ENCODE measurements at regions of chr2 and their contacts with region 1.

Region 1: DNA sequence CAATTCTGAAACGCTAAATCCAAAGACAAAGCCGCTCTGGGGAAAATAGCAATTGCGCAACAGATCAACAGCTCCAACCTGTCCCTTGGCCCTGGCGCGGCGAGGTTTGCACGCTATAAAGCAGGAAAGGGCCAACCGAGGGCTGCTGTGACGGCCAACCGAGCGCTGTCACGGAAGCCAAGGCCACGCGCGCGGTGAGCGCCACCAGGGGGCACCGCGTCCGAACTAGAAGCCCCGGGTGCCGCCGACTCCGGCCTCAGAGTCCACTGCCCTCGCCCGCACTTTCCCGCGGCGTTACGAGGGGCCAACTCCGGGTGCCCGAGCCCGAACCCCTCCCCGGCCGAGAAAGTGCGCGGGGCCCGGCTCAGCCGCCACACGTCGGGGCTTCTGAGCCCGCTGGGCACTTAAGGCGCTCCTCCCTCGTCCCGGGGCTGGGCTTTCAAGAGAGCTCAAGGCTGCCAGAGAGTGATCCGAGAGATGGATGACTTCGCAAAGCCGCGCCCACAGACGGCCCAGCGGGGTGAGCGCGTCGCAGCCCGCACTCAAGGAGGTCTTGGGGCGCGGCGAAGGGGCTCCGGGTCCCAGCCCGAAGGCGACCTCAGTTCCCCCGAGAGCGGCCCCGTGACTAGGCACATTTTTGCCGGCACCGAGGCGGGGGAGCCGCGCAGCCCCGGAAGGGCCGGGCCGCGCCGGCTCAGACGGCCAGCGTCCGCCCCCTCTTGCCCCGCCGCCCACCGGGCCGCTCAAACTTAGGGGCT is 897 bp downstream of the NFE2L2 start:
- DNase-seq: peak; percentile 93
- H3K4me3 Mint-ChIP-seq: peak overlapping the region; percentile 91
- H3K27ac Mint-ChIP-seq: peak overlapping the region; percentile 97
- H3K4me1 Mint-ChIP-seq: peaks cover 57% of the 10 kb centered on the region
- H3K27me3 Mint-ChIP-seq: no peaks in the 10 kb centered on the region

Region 2: DNA sequence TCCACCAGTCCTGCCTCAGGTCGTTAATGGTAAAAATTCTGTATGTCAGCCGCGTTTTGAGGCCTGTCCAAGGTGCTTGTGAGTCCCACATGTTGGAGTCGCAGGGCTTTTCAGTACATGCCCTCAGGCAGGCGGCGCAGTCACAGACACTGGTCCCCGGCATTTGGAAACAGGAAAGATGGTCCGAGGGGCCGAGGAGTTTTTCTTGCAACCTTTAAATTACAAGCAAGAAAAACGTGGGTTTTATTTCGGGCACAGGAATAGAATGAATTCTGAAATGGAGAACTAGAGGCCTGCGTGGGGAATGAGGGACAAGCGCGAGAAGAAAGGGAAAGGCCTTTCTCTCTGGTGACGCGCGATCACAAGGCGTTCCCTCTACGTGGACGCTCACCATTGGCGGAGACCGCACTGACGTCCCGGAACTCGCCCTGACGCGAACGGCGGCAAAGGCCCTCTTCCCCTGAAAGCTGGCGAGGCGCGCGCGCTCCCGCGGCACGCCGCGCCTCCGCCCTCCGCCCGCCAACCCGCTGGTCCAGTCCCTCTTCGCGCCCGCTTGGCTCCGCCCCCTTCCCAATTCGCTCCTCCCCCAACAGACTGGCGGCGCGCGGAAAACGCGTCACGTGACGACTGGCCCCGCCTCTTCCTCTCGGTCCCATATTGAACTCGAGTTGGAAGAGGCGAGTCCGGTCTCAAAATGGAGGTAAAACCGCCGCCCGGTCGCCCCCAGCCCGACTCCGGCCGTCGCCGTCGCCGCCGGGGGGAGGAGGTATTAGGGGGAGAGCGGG is 51.3 kb before region 1 on chr2 and contains the start of gene HNRNPA3:
- CTCF ChIA-PET with region 1: interaction called, 9 read pairs
- POLR2A ChIA-PET with region 1: interaction called, 11 read pairs
- DNase-seq: peak; percentile 99
- H3K4me3 Mint-ChIP-seq: peak within 1 kb of the TSS; percentile 87
- H3K27ac Mint-ChIP-seq: peak within 1 kb of the TSS; percentile 99
- H3K4me1 Mint-ChIP-seq: peaks cover 47% of the 10 kb centered on the region
- H3K27me3 Mint-ChIP-seq: no peaks in the 10 kb centered on the region
- total RNA-seq, gene HNRNPA3: 312 to 318 TPM

Region 3: DNA sequence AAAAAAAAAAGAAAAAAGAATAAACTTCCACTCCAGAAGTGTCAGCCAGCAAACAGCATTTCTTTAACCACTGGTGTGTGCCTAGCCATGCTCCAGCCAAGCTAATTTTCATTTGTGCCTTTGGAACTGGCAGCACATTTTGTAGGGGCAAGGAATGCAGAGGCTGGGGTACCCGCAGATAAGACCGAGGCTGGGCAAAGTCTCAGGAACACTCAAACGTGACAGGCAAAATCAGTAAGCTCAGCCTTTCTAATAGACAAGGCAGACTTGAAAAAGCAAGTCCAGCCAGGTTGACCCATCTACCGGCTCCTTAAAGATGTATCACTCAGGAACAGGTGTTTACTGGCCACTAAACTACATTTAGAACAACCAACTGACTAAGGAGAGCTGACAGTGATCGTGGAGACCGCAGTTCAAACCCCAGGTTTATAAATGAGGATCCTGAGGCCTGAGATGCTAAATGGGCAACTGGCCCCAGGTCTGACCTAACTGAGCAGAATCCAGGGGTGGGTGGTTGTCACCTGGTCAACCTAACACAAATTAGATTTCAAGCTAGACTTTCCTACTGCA is 15.9 kb before region 1 on chr2:
- CTCF ChIA-PET with region 1: interaction called, 52 read pairs
- POLR2A ChIA-PET with region 1: interaction called, 7 read pairs
- DNase-seq: no peak
- H3K4me3 Mint-ChIP-seq: no peak overlapping the region
- H3K27ac Mint-ChIP-seq: peak overlapping the region; percentile 19
- H3K4me1 Mint-ChIP-seq: peaks cover 72% of the 10 kb centered on the region
- H3K27me3 Mint-ChIP-seq: no peaks in the 10 kb centered on the region

Region 4: GRCh38 chr2:177289824-177290628 is 26.4 kb after region 1 on chr2:
- CTCF ChIA-PET with region 1: interaction called, 74 read pairs
- POLR2A ChIA-PET with region 1: interaction called, 15 read pairs
- DNase-seq: peak; percentile 47
- H3K4me3 Mint-ChIP-seq: peak overlapping the region; percentile 60
- H3K27ac Mint-ChIP-seq: peak overlapping the region; percentile 92
- H3K4me1 Mint-ChIP-seq: peaks cover 63% of the 10 kb centered on the region
- H3K27me3 Mint-ChIP-seq: no peaks in the 10 kb centered on the region

Measured in activated CD4-positive, alpha-beta T cell treated with anti-CD3 and anti-CD28 coated beads, Interleukin-2, amount 10 ng/mL, durations not matched to agents 7 days and 5 days (primary cell).